GM13976 (cell line): ENCODE measurements at regions of chr11 and their contacts with region 1.

Region 1: DNA sequence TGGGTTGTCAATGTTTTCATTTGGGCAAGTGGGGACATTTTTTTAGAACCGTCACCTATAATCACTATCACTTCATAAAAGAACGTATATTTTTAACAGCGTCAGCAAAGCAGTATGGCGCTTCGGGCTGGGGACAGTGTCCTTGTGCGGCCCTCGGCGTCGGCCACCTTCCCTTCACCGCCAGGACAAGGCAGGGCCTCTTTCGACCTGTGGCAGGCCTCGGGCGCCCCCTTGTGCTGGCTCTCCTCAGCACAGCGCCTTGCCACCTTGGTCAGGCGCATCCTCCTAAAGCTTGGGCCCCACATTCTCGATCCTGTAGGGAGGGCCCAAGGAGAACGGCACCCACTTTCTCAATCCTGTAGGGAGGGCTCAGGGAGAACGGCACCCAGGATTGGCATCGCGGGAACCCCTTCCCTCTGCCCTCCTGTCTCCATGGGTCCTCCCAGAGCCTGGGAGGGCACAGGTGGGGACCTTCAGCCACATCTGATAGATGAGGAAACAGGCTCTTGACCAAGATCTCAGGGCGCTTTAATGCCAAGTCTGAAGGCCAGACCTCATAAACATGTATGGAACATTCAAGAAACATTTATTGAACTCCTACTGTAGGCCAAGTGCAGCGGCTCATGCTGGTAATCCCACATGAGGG is 11.5 kb upstream of the FADD start:
- DNase-seq: peak; percentile 86
- CTCF ChIP-seq: peak; percentile 90

Region 2: DNA sequence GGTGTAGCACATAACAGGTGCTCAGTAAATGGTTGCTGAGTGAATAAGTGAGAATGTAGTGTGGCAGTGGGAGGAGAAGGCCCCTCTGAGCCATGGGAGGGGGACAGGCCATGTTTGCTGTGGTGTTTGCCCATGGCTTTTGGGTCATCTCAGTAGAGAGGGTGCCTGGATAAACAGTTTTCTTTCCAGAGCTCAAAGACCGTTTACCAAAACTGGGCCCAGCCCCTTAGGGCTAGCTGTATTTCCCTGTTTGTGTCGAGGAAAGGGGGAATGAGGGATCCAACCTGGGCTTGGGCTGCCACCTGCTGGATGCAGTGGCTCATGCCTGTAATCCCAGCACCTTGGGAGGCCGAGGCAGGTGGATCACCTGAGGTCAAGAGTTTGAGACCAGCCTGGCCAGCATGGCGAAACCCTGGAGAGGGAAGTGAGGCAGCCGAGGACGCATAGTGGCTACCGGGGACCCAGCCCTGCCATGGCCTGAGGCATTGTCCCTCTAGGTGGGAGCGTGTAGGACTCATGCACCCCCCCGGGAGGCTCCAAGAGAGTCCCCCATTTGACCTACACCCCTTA is 507.8 kb before region 1 on chr11:
- in situ Hi-C with region 1: loop called (anchors 25 kb)
- DNase-seq: no peak
- CTCF ChIP-seq: peak; percentile 38

Region 3: GRCh38 chr11:69918938-69919650 is 272.5 kb before region 1 on chr11:
- in situ Hi-C with region 1: loop called (anchors 10 kb)
- DNase-seq: peak; percentile 87
- CTCF ChIP-seq: peak; percentile 76

Region 4: DNA sequence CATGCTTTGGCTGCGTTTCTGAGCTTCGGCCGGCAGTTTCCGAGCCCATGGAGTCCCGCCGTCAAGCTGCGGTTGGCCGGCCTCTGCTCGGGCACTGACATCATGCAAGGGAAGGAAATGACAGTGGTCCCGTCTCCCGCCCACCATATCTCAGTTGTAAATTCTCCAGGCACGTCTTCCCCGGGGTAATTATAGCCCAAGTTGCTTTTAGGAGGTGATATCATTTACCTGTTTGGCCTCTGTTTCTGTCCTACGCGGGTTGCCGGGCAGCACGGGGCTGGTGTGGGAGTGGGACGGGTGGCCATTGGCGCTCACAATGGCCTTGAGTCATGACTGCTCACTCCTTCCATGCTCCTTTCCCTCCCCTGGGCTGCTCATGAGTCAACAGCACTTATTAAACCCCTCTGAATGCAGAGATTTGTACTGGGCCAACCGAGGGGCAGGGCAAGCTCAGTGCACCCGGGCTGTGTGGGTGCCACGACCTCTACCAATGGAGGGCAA is 117.7 kb before region 1 on chr11:
- in situ Hi-C with region 1: no loop called
- DNase-seq: peak; percentile 83
- CTCF ChIP-seq: no peak

Region 5: DNA sequence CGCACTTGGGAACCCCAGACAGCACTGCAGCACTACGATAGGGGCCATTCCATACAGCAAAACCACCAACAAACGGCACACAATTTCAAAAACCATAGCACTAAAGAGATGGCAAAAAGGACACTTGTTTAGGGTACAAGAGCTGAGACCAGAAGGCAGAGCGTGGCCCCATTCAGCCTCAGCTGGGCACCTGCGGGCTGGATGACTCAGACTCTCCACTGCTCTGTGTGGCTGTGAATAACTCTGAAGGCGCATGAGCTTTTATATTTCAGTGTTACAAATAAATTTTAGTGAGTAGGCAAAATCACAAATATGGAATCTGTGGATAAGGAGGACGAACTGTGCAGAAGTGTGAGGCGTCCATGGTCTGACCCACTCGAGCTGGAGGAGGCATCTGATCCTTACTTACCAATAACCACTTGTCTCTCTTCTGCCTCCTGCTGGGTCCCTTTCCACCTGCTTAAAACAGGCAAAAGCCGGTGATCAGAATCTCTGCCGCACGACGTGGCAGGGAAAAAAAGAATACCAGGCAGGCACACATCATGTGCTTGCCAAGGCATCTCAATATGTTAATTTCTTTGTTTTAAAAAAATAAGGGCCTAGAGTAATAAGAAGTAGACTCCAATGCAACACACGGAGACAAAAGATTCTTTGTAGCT is 735.1 kb after region 1 on chr11:
- in situ Hi-C with region 1: no loop called
- DNase-seq: no peak
- CTCF ChIP-seq: no peak